PC-9 (cell line): ENCODE measurements at regions of chr15 and their contacts with region 1.

Region 1: DNA sequence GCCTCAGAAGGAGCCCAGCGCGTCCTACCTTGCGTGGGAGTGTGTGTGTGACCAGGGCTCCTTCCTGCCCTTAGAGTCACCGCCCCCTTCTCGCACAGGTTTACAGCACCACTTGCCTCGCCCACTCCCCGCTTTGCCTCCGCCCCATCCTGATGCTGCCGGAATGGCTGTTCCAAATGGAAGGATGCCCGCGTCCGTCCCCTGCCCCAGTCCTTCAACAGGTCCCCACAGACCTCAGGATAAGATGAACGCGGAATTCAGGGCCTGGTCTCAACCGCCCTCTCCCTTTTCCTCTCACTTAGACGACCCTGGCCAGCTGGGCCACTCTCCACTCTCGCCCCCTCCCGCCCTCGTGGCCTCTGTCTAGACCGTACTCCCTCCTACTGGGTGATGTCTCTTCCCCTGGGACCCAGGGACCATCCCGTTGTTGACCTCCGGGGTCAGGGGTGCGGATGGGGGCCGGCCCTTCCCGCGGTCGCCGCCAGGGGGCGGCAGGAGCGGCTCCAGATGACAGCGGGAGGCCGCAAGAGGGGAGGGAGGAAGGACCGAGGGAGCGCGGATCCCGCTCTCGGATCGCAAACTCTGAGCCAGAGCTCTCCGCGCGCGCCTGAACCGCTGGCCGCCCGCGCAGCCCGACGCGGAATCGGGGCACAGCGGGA is at the start of gene THSD4:
- DNase-seq: peak; percentile 76 to 82
- H3K4me3 ChIP-seq: peak within 1 kb of the TSS; percentile 84
- H3K27ac ChIP-seq: peak within 1 kb of the TSS; percentile 91
- H3K4me1 ChIP-seq: peaks cover 45% of the 10 kb centered on the region
- H3K27me3 ChIP-seq: no peaks in the 10 kb centered on the region
- CTCF ChIP-seq: peak; percentile 98
- total RNA-seq, gene THSD4: 29.3 and 33.1 TPM in 2 replicates

Region 2: DNA sequence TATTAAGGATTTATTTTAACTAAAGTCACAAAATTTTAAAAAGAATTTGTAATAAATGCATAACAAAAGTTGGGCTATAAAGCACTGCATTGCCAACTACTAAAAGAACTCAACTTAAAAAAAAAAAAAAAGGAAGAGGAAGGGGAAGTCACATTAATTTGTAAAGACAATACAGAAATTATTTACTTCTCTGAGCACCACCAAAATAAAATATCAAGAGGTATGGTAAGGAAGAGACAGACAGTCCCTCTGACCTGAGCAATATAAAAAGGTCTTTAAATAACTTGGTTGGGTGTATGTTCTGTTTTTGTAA is 435.1 kb before region 1 on chr15:
- CTCF ChIA-PET with region 1: interaction called, 15 read pairs
- POLR2A ChIA-PET with region 1: no interaction called
- intact Hi-C with region 1: no loop called
- DNase-seq: no peak
- H3K4me3 ChIP-seq: no peak overlapping the region
- H3K27ac ChIP-seq: no peak overlapping the region
- H3K4me1 ChIP-seq: no peaks in the 10 kb centered on the region
- H3K27me3 ChIP-seq: no peaks in the 10 kb centered on the region
- CTCF ChIP-seq: 0 out of 2 replicates have a peak, but pooled peaks have one; percentile 1

Region 3: DNA sequence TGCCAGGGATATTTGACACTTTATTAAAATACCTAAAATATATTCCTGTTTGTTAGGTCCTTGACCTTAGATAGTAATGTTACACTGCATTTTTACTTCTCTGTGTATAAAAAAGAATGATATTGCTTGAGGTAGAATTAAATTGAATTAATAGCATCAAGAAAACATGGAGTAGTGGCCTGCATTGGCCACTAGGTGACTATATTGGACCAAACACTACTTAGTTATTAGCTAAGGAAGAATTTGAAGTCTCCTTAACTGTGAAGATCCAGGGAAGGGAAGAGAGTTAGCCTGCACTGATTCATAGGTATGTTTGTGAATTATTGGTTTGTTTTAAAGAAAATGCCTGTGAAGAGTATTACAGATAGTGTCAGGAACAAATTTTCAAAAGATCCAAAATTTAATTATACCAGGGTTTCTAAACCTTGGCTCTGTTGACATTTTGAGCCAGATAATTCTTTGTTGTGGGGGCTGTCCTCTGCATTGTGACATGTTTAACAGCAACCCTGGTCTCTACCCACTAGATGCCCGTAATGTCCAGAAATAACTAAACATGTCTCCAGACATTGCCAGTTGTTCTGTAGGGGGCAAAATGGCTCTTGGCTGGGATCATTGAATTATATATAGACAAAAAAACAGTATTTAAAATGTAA is 103.4 kb before region 1 on chr15:
- CTCF ChIA-PET with region 1: interaction called, 3 read pairs
- POLR2A ChIA-PET with region 1: no interaction called
- intact Hi-C with region 1: loop called (anchors 1 kb)
- DNase-seq: peak in 1 of 2 experiments; percentile 21
- H3K4me3 ChIP-seq: no peak overlapping the region
- H3K27ac ChIP-seq: no peak overlapping the region
- H3K4me1 ChIP-seq: no peaks in the 10 kb centered on the region
- H3K27me3 ChIP-seq: no peaks in the 10 kb centered on the region
- CTCF ChIP-seq: peak; percentile 83

Region 4: GRCh38 chr15:71139241-71139640 is 24.2 kb after region 1 on chr15:
- CTCF ChIA-PET with region 1: no interaction called
- POLR2A ChIA-PET with region 1: no interaction called
- intact Hi-C with region 1: no loop called
- DNase-seq: no peak
- H3K4me3 ChIP-seq: no peak overlapping the region
- H3K27ac ChIP-seq: no peak overlapping the region
- H3K4me1 ChIP-seq: peaks cover 13% of the 10 kb centered on the region
- H3K27me3 ChIP-seq: no peaks in the 10 kb centered on the region
- CTCF ChIP-seq: no peak

Region 5: GRCh38 chr15:71151081-71151480 is 36.1 kb after region 1 on chr15:
- CTCF ChIA-PET with region 1: no interaction called
- POLR2A ChIA-PET with region 1: no interaction called
- intact Hi-C with region 1: loop called (anchors 1 kb)
- DNase-seq: no peak
- H3K4me3 ChIP-seq: no peak overlapping the region
- H3K27ac ChIP-seq: no peak overlapping the region
- H3K4me1 ChIP-seq: no peaks in the 10 kb centered on the region
- H3K27me3 ChIP-seq: no peaks in the 10 kb centered on the region
- CTCF ChIP-seq: no peak

Region 6: GRCh38 chr15:71278989-71279756 is 164.1 kb after region 1 on chr15:
- CTCF ChIA-PET with region 1: no interaction called
- POLR2A ChIA-PET with region 1: no interaction called
- intact Hi-C with region 1: loop called (anchors 1 kb)
- DNase-seq: peak; percentile 77 to 96
- H3K4me3 ChIP-seq: 0 out of 2 replicates have a peak overlapping the region, but pooled peaks have one; percentile 10
- H3K27ac ChIP-seq: peak overlapping the region; percentile 99
- H3K4me1 ChIP-seq: peaks cover 75% of the 10 kb centered on the region
- H3K27me3 ChIP-seq: no peaks in the 10 kb centered on the region
- CTCF ChIP-seq: no peak

Region 7: DNA sequence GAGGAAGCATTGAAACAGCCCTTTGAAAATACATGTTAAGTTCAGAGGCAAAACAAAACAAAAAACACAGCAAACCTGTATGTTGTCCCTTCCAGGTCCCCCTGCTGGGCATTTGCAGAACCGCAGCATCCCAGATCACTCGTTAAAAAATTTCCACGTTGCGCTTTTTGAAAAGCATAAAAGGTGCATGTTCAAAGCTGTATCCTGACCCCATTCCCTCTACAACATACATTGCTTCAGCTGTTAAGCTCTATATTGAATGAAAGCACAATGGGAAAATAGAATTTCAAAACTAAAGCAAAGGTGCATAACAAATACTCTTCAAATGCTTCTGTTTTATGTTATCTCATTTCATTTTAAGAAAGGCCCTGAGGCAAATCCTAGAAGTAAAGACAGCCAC is 328.5 kb after region 1 on chr15:
- CTCF ChIA-PET with region 1: no interaction called
- POLR2A ChIA-PET with region 1: no interaction called
- intact Hi-C with region 1: loop called (anchors 2 kb)
- DNase-seq: peak in 1 of 2 experiments; percentile 45
- H3K4me3 ChIP-seq: no peak overlapping the region
- H3K27ac ChIP-seq: no peak overlapping the region
- H3K4me1 ChIP-seq: peaks cover 63% of the 10 kb centered on the region
- H3K27me3 ChIP-seq: no peaks in the 10 kb centered on the region
- CTCF ChIP-seq: peak; percentile 80